ENCODE measurements at regions of chr1 and their contacts with region 1.

Region 1: DNA sequence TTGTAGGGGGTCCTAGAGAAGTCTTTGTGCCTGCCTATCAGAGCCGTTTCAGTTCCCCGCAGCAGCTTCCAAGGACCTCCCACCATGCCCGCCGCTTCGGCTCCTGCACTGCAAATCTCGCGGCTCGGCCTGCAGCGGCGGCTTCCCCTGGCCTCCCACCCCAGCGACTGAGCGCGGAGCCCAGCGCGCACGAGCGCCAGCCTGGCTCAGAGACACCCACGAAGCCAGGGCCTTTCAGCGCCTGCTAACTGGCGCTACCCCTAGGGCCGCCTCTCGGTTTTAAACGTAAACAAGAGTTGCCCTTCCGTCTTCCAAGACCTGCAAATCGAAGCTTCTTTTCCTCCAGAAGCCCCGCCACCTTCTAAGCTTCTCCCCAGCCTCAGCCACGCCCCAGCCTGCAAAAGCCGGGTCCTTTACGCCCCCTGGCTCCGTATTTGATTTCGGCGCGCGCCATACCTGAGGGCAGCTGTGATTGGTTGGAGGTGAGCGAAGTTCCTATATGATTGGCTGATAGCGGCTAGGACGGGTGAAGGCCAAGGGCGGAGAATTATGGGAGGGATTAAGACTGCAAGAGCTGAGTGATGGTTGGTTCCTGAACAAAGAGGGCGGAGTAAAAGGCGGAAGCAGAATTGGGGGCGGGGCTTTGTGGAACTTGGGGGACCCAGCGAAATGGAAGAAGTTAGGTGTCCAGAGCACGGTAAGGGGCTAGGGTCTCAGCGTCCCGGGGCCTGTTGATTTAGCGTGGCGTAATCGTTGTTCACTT is at the start of gene TTF2:
- DNase-seq: peak; percentile 98
- H3K4me3 Mint-ChIP-seq: no peak within 1 kb of the TSS
- H3K27ac Mint-ChIP-seq: no peak within 1 kb of the TSS
- H3K4me1 Mint-ChIP-seq: peaks cover 61% of the 10 kb centered on the region
- H3K27me3 Mint-ChIP-seq: no peaks in the 10 kb centered on the region
- total RNA-seq, gene TTF2: 78.0 to 83.8 TPM

Region 2: GRCh38 chr1:116570358-116571200 is 489.3 kb before region 1 on chr1 and contains the start of gene CD58:
- CTCF ChIA-PET with region 1: interaction called, 6 read pairs
- POLR2A ChIA-PET with region 1: interaction called, 15 read pairs
- DNase-seq: peak; percentile 89
- H3K4me3 Mint-ChIP-seq: peak within 1 kb of the TSS; percentile 89
- H3K27ac Mint-ChIP-seq: peak within 1 kb of the TSS; percentile 85
- H3K4me1 Mint-ChIP-seq: peaks cover 66% of the 10 kb centered on the region
- H3K27me3 Mint-ChIP-seq: no peaks in the 10 kb centered on the region
- total RNA-seq, gene CD58: 55.2 to 59.7 TPM

Region 3: DNA sequence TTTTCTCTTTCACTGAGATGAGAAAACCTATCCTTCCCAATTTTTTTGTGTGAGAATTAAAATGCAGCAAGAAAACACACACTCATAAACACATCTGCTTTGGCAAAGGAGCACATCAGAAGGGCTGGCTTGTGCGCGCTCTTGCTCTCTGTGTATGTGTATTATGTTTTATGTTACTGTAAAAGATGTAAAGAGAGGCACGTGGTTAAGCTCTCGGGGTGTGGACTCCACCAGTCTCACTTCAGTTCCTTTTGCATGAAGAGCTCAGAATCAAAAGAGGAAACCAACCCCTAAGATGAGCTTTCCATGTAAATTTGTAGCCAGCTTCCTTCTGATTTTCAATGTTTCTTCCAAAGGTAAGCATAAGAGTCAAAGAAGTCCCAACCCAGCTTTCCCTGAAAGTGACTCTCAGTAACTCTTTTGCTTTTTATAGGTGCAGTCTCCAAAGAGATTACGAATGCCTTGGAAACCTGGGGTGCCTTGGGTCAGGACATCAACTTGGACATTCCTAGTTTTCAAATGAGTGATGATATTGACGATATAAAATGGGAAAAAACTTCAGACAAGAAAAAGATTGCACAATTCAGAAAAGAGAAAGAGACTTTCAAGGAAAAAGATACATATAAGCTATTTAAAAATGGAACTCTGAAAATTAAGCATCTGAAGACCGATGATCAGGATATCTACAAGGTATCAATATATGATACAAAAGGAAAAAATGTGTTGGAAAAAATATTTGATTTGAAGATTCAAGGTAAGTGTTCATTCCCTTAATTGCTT is 305.5 kb before region 1 on chr1 and contains the start of gene CD2:
- CTCF ChIA-PET with region 1: interaction called, 8 read pairs
- POLR2A ChIA-PET with region 1: interaction called, 35 read pairs
- DNase-seq: peak; percentile 73
- H3K4me3 Mint-ChIP-seq: peak within 1 kb of the TSS; percentile 99
- H3K27ac Mint-ChIP-seq: peak within 1 kb of the TSS; percentile 95
- H3K4me1 Mint-ChIP-seq: peaks cover 39% of the 10 kb centered on the region
- H3K27me3 Mint-ChIP-seq: no peaks in the 10 kb centered on the region
- total RNA-seq, gene CD2: 329 to 340 TPM

Region 4: GRCh38 chr1:116806245-116806644 is 253.6 kb before region 1 on chr1:
- CTCF ChIA-PET with region 1: interaction called, 7 read pairs
- POLR2A ChIA-PET with region 1: interaction called, 98 read pairs
- DNase-seq: peak; percentile 65
- H3K4me3 Mint-ChIP-seq: peak overlapping the region; percentile 79
- H3K27ac Mint-ChIP-seq: peak overlapping the region; percentile 95
- H3K4me1 Mint-ChIP-seq: peaks cover 86% of the 10 kb centered on the region
- H3K27me3 Mint-ChIP-seq: no peaks in the 10 kb centered on the region

Region 5: DNA sequence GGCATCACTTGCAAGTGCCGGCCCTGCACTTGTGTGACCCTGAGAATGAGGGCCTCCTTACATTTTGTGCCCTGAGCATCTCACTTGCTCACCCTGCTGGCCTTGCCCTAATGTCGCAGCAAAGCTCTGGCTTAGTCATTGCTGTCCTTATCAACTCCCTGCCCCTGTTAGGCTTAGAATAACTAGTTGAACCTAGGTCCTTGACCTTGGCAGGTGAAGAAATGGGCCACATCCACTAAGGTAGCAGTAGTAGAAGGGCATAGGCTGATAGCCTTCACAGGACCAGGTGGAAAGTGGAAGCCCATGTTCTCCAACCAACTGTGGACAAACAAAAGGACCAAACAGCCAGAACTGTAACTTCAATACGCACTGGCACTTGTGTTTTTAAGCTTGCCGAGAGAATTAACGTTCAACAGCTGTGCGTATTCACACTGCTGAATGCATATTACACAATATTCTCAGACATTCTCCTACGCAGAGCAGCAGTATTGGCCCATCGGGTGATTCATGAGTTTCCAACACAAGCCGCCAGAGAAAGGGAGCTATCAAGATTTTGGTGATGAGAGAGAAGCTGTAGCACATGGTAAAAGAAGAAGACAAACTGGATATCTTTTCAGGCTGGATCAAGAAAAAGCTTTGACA is 177.9 kb before region 1 on chr1:
- CTCF ChIA-PET with region 1: interaction called, 5 read pairs
- POLR2A ChIA-PET with region 1: interaction called, 16 read pairs
- DNase-seq: peak; percentile 53
- H3K4me3 Mint-ChIP-seq: no peak overlapping the region
- H3K27ac Mint-ChIP-seq: no peak overlapping the region
- H3K4me1 Mint-ChIP-seq: peaks cover 5% of the 10 kb centered on the region
- H3K27me3 Mint-ChIP-seq: no peaks in the 10 kb centered on the region

Region 6: GRCh38 chr1:116971258-116971860 is 88.5 kb before region 1 on chr1:
- CTCF ChIA-PET with region 1: no interaction called
- POLR2A ChIA-PET with region 1: no interaction called
- DNase-seq: no peak
- H3K4me3 Mint-ChIP-seq: no peak overlapping the region
- H3K27ac Mint-ChIP-seq: no peak overlapping the region
- H3K4me1 Mint-ChIP-seq: no peaks in the 10 kb centered on the region
- H3K27me3 Mint-ChIP-seq: peaks cover 2% of the 10 kb centered on the region

Region 7: GRCh38 chr1:117077267-117077666 is 17.4 kb after region 1 on chr1:
- CTCF ChIA-PET with region 1: interaction called, 5 read pairs
- POLR2A ChIA-PET with region 1: interaction called, 30 read pairs
- DNase-seq: peak; percentile 47
- H3K4me3 Mint-ChIP-seq: no peak overlapping the region
- H3K27ac Mint-ChIP-seq: peak overlapping the region; percentile 39
- H3K4me1 Mint-ChIP-seq: peaks cover 20% of the 10 kb centered on the region
- H3K27me3 Mint-ChIP-seq: no peaks in the 10 kb centered on the region

Measured in activated CD4-positive, alpha-beta memory T cell treated with anti-CD3 and anti-CD28 coated beads, Interleukin-2, amount 10 ng/mL, durations not matched to agents 7 days and 5 days (primary cell).